HEK293T (cell line): ENCODE measurements at regions of chr1 and their contacts with region 1.

Region 1: DNA sequence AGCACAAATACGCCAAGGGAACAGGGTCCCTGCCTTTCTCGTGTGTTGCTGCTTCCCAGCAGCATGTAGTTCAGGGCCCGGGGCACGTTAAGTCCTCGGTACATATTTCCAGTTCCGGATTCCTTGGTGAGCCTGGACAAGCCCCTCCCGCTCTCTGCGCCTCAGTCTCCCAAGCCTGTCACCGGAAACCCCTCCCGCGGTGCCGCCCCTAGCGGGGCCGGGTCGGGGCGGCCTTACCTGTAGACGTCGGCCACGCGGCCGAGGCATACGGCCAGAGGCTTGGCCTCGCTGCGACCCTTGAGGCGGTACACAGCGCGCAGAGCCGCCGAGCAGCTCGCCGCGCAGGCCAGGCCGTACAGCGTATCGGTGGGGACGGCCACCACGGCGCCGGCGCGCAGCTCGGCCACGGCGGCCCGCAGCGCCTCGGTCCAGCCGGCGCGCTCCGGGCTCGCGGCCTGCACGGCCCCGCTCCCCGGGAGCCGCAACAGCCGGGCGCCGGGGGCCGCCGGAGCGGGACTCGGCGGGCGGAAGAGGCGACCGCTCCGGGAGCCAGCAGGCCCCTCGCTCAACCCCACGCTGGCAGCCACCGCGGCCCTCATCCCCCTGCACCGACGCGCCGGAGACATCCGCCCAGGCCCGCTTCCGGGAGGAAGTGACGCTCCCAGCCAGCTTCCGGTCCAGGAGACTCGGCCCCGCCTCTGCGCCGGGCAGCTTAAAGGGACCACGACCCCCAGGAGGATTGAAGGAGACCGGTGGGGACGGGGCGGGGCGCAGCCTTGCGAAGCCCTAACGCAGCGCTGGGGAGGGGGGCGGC is at the starts of genes C1orf122 and YRDC:
- DNase-seq: peak; percentile 95

Region 2: GRCh38 chr1:37793773-37794371 is 13.9 kb before region 1 on chr1 and contains the start of gene MANEAL:
- CTCF ChIA-PET with region 1: no interaction called
- POLR2A ChIA-PET with region 1: interaction called, 32 read pairs
- DNase-seq: peak; percentile 79

Region 3: GRCh38 chr1:37859507-37860345 is 52.0 kb after region 1 on chr1 and contains the start of gene MTF1:
- CTCF ChIA-PET with region 1: interaction called, 4 read pairs
- POLR2A ChIA-PET with region 1: interaction called, 31 read pairs
- DNase-seq: peak; percentile 99